ENCODE measurements at regions of chr9 and their contacts with region 1.

Region 1: GRCh38 chr9:120792898-120793765 is at the start of gene FBXW2:
- DNase-seq: peak; percentile 95
- ATAC-seq: peak; percentile 92
- H3K4me3 Mint-ChIP-seq: peak within 1 kb of the TSS; percentile 93
- H3K27ac Mint-ChIP-seq: peak within 1 kb of the TSS; percentile 97
- H3K4me1 Mint-ChIP-seq: peaks cover 43% of the 10 kb centered on the region
- H3K27me3 Mint-ChIP-seq: no peaks in the 10 kb centered on the region
- total RNA-seq, gene FBXW2: 53.0 to 68.1 TPM

Region 2: GRCh38 chr9:120579750-120580590 is 213.2 kb before region 1 on chr9 and contains the start of gene CDK5RAP2:
- CTCF ChIA-PET with region 1: no interaction called
- POLR2A ChIA-PET with region 1: no interaction called
- intact Hi-C with region 1: loop called in 1 of 2 experiments (anchors 1 kb)
- DNase-seq: peak; percentile 96
- ATAC-seq: peak; percentile 99
- H3K4me3 Mint-ChIP-seq: peak within 1 kb of the TSS; percentile 99
- H3K27ac Mint-ChIP-seq: peak within 1 kb of the TSS; percentile 94
- H3K4me1 Mint-ChIP-seq: peaks cover 40% of the 10 kb centered on the region
- H3K27me3 Mint-ChIP-seq: no peaks in the 10 kb centered on the region
- total RNA-seq, gene CDK5RAP2: 68.8 to 85.8 TPM

Region 3: DNA sequence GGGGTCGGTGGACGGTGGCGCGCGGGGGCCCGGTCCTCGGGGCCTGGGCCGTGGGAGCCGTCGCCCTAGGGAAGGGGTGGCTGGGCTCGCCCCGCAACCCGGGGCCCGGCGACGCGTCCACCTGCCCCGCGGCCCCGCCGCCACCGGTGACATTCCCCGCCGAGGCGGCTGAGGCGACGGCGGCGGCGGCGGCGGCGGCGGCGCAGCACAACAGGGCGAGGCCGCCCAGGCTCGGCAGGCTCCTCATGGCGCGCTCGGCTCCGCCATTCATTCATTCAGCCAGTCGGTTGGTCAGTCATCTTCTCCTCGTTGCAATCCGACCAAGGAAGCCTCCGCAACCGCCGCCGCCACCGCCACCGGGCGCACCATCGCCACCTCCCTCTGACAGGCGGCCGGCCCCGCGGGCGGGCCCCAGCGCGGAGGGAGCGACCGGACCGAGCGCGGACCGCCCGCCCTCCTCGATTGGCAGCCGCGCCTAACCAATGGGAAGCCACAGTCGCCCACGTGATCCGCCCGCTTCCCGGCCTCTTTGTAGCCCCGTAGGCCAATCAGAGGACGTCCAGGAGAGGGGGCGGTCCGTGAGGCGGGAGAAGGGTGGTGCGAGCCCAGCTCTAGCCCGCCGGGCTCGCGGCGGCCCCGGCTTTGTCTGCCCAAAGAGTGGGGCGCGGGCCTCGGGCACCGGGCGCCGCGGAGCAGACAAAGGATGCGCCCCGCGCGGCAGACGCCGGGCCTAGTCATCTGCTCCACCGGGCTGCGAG is 78.9 kb before region 1 on chr9 and contains the start of gene MEGF9:
- CTCF ChIA-PET with region 1: interaction called, 3 read pairs
- POLR2A ChIA-PET with region 1: interaction called, 3 read pairs
- intact Hi-C with region 1: loop called in 1 of 2 experiments (anchors 1 kb)
- DNase-seq: peak; percentile 99
- ATAC-seq: peak; percentile 98
- H3K4me3 Mint-ChIP-seq: peak within 1 kb of the TSS; percentile 84
- H3K27ac Mint-ChIP-seq: peak within 1 kb of the TSS; percentile 74
- H3K4me1 Mint-ChIP-seq: peaks cover 34% of the 10 kb centered on the region
- H3K27me3 Mint-ChIP-seq: no peaks in the 10 kb centered on the region
- total RNA-seq, gene MEGF9: 3.3 to 3.6 TPM

Region 4: GRCh38 chr9:120729791-120730241 is 63.3 kb before region 1 on chr9:
- CTCF ChIA-PET with region 1: no interaction called
- POLR2A ChIA-PET with region 1: no interaction called
- intact Hi-C with region 1: no loop called
- DNase-seq: no peak
- ATAC-seq: no peak
- H3K4me3 Mint-ChIP-seq: no peak overlapping the region
- H3K27ac Mint-ChIP-seq: no peak overlapping the region
- H3K4me1 Mint-ChIP-seq: peaks cover 11% of the 10 kb centered on the region
- H3K27me3 Mint-ChIP-seq: no peaks in the 10 kb centered on the region

Region 5: GRCh38 chr9:120868676-120869359 is 75.7 kb after region 1 on chr9:
- CTCF ChIA-PET with region 1: interaction called, 3 read pairs
- POLR2A ChIA-PET with region 1: interaction called, 4 read pairs
- intact Hi-C with region 1: loop called in 1 of 2 experiments (anchors 1 kb)
- DNase-seq: peak; percentile 99
- ATAC-seq: peak; percentile 94
- H3K4me3 Mint-ChIP-seq: peak overlapping the region; percentile 64
- H3K27ac Mint-ChIP-seq: peak overlapping the region; percentile 70
- H3K4me1 Mint-ChIP-seq: peaks cover 40% of the 10 kb centered on the region
- H3K27me3 Mint-ChIP-seq: no peaks in the 10 kb centered on the region

Region 6: DNA sequence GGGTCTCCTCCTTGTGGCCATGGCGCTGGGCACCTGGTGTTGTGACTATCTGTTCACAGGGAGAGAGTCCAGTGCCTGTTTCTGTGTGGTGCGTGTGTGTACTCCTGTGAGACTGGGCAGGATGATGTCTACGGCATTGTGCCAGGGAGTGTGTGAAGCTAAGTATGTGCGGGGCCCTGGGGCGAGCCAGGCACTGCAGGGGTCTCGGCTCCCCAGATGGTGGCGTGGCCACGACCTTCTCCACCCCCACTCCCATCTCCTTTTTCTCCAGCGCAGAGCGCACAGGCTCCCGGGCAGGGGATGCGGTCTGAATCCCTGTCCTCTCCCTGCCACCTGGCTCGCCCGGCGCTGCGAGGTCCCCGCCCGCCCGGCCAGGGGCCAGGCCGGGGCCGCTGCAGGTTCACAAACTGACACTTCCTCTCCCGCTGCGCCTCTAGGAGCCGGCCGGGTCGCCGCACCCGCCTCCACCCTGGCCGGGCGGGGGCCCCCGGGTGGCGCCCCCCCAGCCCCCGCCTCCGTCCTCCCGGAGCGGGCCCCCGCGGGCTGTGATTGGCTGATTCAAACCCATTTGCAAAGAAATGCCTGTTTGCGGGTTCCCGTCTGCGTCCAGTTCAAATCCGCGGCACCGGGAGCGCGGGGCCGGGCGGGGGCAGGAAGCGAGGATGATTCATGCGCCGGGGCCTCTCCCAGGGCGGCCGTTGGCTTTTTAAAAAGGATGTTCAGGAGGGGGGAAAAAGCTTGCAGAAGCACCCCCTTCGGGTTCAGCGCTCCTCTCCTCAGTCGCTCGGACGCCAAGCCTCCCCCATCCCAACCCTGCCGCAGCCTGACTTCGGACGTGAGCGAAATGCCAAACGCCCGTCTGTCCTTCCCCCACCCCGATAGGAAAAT is 83.1 kb after region 1 on chr9:
- CTCF ChIA-PET with region 1: no interaction called
- POLR2A ChIA-PET with region 1: interaction called, 4 read pairs
- intact Hi-C with region 1: loop called in 1 of 2 experiments (anchors 2 kb)
- DNase-seq: peak; percentile 95
- ATAC-seq: peak; percentile 59
- H3K4me3 Mint-ChIP-seq: peak overlapping the region; percentile 85
- H3K27ac Mint-ChIP-seq: peak overlapping the region; percentile 94
- H3K4me1 Mint-ChIP-seq: peaks cover 73% of the 10 kb centered on the region
- H3K27me3 Mint-ChIP-seq: no peaks in the 10 kb centered on the region

Region 7: GRCh38 chr9:120936011-120936763 is 143.1 kb after region 1 on chr9:
- CTCF ChIA-PET with region 1: interaction called, 3 read pairs
- POLR2A ChIA-PET with region 1: interaction called, 3 read pairs
- intact Hi-C with region 1: loop called (anchors 1 kb)
- DNase-seq: peak; percentile 95
- ATAC-seq: peak; percentile 73
- H3K4me3 Mint-ChIP-seq: peak overlapping the region; percentile 34
- H3K27ac Mint-ChIP-seq: peak overlapping the region; percentile 93
- H3K4me1 Mint-ChIP-seq: peaks cover 62% of the 10 kb centered on the region
- H3K27me3 Mint-ChIP-seq: no peaks in the 10 kb centered on the region

Region 8: GRCh38 chr9:121121582-121122087 is 328.5 kb after region 1 on chr9:
- CTCF ChIA-PET with region 1: no interaction called
- POLR2A ChIA-PET with region 1: no interaction called
- intact Hi-C with region 1: loop called in 1 of 2 experiments (anchors 2 kb)
- DNase-seq: peak; percentile 98
- ATAC-seq: peak; percentile 99
- H3K4me3 Mint-ChIP-seq: peak overlapping the region; percentile 79
- H3K27ac Mint-ChIP-seq: peak overlapping the region; percentile 90
- H3K4me1 Mint-ChIP-seq: peaks cover 51% of the 10 kb centered on the region
- H3K27me3 Mint-ChIP-seq: no peaks in the 10 kb centered on the region

Measured in activated CD4-positive, alpha-beta T cell treated with anti-CD3 and anti-CD28 coated beads for 36 hours (primary cell).